ENCODE measurements at regions of chr12 and their contacts with region 1.

Region 1: DNA sequence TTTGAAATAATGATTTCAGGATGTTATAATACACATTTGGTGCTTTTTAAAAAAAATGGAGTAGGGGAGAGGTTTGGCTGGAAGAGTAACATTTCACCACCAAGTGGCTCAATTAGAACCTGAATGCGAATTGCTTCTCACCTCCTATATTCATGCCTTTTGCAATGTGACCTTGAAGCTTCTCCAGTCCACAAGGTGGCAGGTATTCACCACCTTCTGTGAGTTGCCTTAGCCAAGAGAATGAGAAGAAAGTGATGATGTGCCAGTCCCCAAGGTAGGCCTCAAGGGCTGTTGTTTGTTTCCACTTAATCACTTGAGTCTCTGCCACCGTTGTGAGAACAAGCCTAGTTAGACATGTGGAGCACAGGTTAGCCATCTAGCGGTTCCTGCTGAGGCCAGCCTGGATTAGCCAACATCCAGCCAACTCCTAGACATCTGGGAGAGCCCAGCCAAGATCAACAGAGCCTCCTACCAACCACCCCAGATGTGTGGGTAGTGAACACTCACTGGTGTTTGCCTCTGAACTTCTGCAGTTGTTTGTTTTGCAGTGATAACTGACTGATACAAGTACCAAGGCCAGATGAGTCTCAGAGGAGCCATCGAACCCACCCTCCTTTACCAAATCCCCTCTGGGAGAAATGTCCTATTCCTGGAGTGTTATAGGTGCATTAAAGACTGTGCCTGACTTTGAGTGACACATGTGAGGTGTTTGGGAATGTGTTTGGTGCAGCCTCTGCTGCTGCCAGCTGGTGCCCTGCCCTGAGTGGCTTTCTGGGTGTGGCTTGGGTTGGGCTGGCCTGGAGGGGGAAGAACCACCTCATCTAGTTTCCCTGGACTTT is 132.5 kb upstream of the RFLNA start:
- DNase-seq: peak; percentile 26
- ATAC-seq: no peak
- H3K4me3 Mint-ChIP-seq: no peak overlapping the region
- H3K27ac Mint-ChIP-seq: no peak overlapping the region
- H3K4me1 Mint-ChIP-seq: no peaks in the 10 kb centered on the region
- H3K27me3 Mint-ChIP-seq: no peaks in the 10 kb centered on the region

Region 2: GRCh38 chr12:124321040-124321481 is 158.7 kb after region 1 on chr12:
- CTCF ChIA-PET with region 1: no interaction called
- POLR2A ChIA-PET with region 1: no interaction called
- intact Hi-C with region 1: loop called in 1 of 2 experiments (anchors 1 kb)
- DNase-seq: peak; percentile 82
- ATAC-seq: peak; percentile 92
- H3K4me3 Mint-ChIP-seq: no peak overlapping the region
- H3K27ac Mint-ChIP-seq: no peak overlapping the region
- H3K4me1 Mint-ChIP-seq: no peaks in the 10 kb centered on the region
- H3K27me3 Mint-ChIP-seq: no peaks in the 10 kb centered on the region

Region 3: DNA sequence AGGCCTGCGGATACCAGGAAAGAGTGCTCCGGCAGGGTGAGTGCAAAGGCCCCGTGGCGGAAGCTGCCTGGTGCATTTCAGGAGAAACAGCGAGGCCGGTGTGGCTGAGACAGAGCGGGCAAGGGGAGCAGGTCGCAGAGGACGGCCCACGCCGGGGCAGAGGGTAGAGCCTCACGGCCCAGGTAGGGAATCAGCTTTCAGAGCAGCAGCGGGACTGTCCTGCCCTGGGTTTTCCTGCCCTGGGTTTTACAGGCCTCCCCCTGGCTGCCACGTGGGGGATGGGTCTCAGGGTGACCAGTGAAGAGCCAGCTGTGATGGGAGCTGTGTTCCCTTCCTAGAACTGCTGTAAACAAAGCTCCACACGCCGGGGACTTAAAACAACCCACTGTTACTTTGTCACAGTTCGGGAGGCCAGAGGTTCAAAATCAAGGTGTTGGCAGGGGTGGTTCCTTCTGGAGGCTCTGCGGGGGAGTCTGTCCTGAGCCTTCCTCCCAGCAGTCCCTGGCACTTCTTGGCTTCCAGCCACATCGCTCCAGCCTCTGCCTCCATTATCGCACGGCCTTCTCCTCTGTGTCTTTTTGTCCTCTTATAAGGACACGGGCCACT is 394.6 kb after region 1 on chr12:
- CTCF ChIA-PET with region 1: no interaction called
- POLR2A ChIA-PET with region 1: no interaction called
- intact Hi-C with region 1: no loop called
- DNase-seq: no peak
- ATAC-seq: no peak
- H3K4me3 Mint-ChIP-seq: no peak overlapping the region
- H3K27ac Mint-ChIP-seq: peak overlapping the region; percentile 8
- H3K4me1 Mint-ChIP-seq: peaks cover 53% of the 10 kb centered on the region
- H3K27me3 Mint-ChIP-seq: no peaks in the 10 kb centered on the region